Activated T-helper 1 cell treated with anti-CD3 and anti-CD28 coated beads, Interleukin-12 subunit alpha, Interleukin-12 subunit beta, Interleukin-2, Interleukin-4 antibody, amounts not matched to agents 30 ng/mL and 10 ng/mL and 1 ng/mL, durations not matched to agents 14 hours and 24 hours and 36 hours (primary cell): ENCODE measurements at regions of chr15 and their contacts with region 1.

Region 1: GRCh38 chr15:69452692-69453521 is at the start of gene RPLP1:
- DNase-seq: peak; percentile 93
- H3K4me3 Mint-ChIP-seq: peak within 1 kb of the TSS; percentile 99
- H3K27ac Mint-ChIP-seq: peak within 1 kb of the TSS; percentile 100
- H3K4me1 Mint-ChIP-seq: peaks cover 35% of the 10 kb centered on the region
- H3K27me3 Mint-ChIP-seq: no peaks in the 10 kb centered on the region
- total RNA-seq, gene RPLP1: 1,633 and 1,710 TPM in 2 replicates

Region 2: GRCh38 chr15:68820295-68821189 is 632.4 kb before region 1 on chr15 and contains the start of gene ANP32A:
- intact Hi-C with region 1: loop called (anchors 2 kb)
- DNase-seq: peak; percentile 94
- H3K4me3 Mint-ChIP-seq: peak within 1 kb of the TSS; percentile 98
- H3K27ac Mint-ChIP-seq: peak within 1 kb of the TSS; percentile 100
- H3K4me1 Mint-ChIP-seq: peaks cover 40% of the 10 kb centered on the region
- H3K27me3 Mint-ChIP-seq: no peaks in the 10 kb centered on the region
- total RNA-seq, gene ANP32A: 275 TPM in 2 replicates

Region 3: DNA sequence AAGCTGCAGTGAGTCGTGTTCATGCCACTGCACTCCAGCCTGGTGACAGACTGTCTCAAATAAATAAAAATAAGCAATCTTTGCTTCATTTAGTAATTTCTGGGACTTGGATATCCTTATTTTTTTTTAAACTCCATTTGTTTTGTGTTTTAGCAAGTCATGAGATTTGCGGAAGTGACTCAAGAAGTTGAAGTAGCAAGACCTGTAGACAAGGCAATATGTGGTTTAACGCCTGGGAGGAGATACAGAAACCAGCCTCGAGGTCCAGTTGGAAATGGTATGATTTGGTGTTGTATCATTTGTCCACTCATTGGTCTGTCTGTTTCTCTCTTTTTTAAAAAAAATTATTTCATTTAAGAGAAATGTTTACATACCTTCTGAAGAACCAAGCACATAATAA is 16.9 kb before region 1 on chr15:
- intact Hi-C with region 1: no loop called
- DNase-seq: no peak
- H3K4me3 Mint-ChIP-seq: no peak overlapping the region
- H3K27ac Mint-ChIP-seq: no peak overlapping the region
- H3K4me1 Mint-ChIP-seq: peaks cover 5% of the 10 kb centered on the region
- H3K27me3 Mint-ChIP-seq: no peaks in the 10 kb centered on the region